Endothelial cell of umbilical vein (primary cell): ENCODE measurements at regions of chr12 and their contacts with region 1.

Region 1: DNA sequence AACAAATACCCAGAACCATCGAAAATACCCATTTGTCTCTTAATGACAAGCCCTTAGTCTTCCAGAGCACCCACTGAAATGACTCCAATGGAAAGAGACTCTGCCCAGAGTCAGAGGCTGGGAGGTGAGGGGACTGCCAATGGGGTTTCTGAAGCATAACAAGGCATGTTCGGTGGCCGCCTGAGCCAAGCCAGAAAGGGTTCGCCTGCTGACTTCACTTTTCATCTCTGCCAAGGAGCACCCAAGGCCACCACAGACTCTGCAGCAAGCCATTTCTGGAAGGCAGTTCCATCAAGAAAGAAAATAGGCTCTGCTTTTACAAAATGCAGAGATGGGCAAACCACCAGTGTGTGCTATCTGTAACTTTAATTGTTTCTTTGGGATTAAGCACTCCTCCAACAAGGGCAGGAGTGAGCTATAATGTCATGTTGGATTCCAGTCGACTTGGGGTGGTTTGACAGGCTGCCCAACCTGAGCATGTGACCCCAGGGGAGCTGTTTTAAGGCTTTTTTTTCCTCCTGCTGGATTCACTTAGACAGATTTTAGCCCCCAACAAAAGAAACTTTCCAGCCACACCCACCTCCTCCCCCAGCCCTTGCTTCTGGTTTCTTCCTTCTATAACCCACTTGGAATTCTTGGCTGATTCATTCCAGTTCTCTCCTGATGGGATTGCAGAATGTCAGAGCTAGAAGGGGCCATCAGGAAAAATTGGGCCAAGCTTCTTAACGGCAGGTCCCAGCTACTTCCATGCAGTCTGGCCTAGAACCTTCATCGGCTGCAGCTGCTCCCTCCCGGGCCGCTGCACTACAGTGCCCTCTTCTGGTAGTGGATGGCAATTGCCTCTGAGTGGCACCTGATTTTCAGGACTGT is 24.1 kb downstream of the CKAP4 start:
- DNase-seq: peak; percentile 75
- H3K4me3 ChIP-seq: no peak overlapping the region
- H3K27ac ChIP-seq: no peak overlapping the region
- H3K4me1 ChIP-seq: no peaks in the 10 kb centered on the region
- H3K27me3 ChIP-seq: peaks cover 9 to 13% of the 10 kb centered on the region in 2 experiments
- CTCF ChIP-seq: peak; percentile 89 to 93
- POLR2A ChIP-seq: no peak

Region 2: DNA sequence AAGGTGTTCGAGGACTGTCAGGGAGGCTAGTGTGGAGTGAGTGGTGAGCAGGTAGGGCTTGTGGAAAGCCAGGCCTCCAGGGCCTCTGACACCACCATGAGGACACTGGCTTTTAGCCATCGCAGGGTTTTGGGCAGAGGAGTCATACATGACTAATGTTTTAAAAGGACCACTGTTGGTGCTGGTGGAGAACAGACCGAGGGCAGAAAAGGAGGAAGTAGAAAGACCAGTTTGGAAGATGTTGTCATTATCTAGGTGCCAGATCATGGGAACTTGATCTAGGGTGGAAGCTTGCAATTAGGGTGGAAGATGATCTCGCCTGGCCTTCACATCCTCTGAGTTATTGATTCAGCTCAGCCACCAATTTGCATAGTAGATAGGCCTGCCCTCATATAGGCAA is 749.0 kb before region 1 on chr12:
- CTCF ChIA-PET with region 1: no interaction called
- POLR2A ChIA-PET with region 1: no interaction called
- dilution Hi-C with region 1: no loop called
- intact Hi-C with region 1: loop called (anchors 5 kb)
- DNase-seq: peak; percentile 62
- H3K4me3 ChIP-seq: no peak overlapping the region
- H3K27ac ChIP-seq: peak overlapping the region; percentile 4
- H3K4me1 ChIP-seq: peaks cover 67% of the 10 kb centered on the region
- H3K27me3 ChIP-seq: no peaks in the 10 kb centered on the region
- CTCF ChIP-seq: no peak
- POLR2A ChIP-seq: no peak

Region 3: DNA sequence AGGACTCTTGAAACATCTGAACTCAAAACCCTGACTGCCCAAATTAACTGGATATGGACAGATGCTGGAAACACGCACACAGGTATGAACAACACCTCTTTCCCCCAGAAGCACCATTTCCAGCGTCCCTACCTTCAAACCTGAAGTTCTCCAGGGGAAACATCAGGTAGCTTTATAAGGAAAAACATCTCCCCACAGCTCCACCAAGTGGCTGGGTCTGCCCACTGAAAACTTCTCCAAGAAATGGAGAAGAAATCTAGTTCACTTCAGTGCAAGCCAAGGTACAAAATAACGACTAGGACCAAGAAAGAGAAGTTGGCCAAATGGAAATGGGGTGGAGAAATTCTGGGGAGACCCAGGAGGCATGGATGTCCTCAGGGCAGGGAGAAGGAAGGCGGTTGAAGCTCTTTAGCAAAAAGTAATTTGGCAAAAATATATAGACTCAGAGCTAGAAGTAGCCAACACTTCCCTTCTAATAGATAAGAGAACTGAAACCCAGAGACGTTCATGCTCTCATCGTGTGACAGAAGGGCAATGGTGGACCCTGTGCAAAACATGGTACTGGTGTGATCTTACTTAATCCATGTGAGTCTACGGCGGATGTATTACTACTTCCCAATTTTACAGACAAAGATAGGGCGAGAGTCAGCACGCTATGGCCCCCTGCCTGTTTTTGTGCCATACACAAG is 74.5 kb before region 1 on chr12:
- CTCF ChIA-PET with region 1: interaction called, 13 read pairs
- POLR2A ChIA-PET with region 1: no interaction called
- dilution Hi-C with region 1: no loop called
- intact Hi-C with region 1: no loop called
- DNase-seq: peak; percentile 59
- H3K4me3 ChIP-seq: no peak overlapping the region
- H3K27ac ChIP-seq: no peak overlapping the region
- H3K4me1 ChIP-seq: peaks cover 17% of the 10 kb centered on the region
- H3K27me3 ChIP-seq: no peaks in the 10 kb centered on the region
- CTCF ChIP-seq: peak; percentile 55 to 68
- POLR2A ChIP-seq: no peak

Region 4: GRCh38 chr12:106288494-106289195 is 64.9 kb after region 1 on chr12:
- CTCF ChIA-PET with region 1: interaction called, 224 read pairs
- POLR2A ChIA-PET with region 1: no interaction called
- dilution Hi-C with region 1: no loop called
- intact Hi-C with region 1: no loop called
- DNase-seq: peak; percentile 69
- H3K4me3 ChIP-seq: no peak overlapping the region
- H3K27ac ChIP-seq: no peak overlapping the region
- H3K4me1 ChIP-seq: peaks cover 6% of the 10 kb centered on the region
- H3K27me3 ChIP-seq: peaks cover 1 to 2% of the 10 kb centered on the region in 2 experiments
- CTCF ChIP-seq: no peak
- POLR2A ChIP-seq: no peak

Region 5: GRCh38 chr12:106841510-106842302 is 618.0 kb after region 1 on chr12:
- CTCF ChIA-PET with region 1: interaction called, 5 read pairs
- POLR2A ChIA-PET with region 1: no interaction called
- dilution Hi-C with region 1: no loop called
- intact Hi-C with region 1: loop called (anchors 5 kb)
- DNase-seq: peak; percentile 75
- H3K4me3 ChIP-seq: peak overlapping the region in 1 of 3 experiments; percentile 27
- H3K27ac ChIP-seq: peak overlapping the region; percentile 15
- H3K4me1 ChIP-seq: peaks cover 20% of the 10 kb centered on the region
- H3K27me3 ChIP-seq: no peaks in the 10 kb centered on the region
- CTCF ChIP-seq: peak; percentile 28 to 43
- POLR2A ChIP-seq: no peak